ENCODE measurements at regions of chr11 and their contacts with region 1.

Region 1: GRCh38 chr11:67630228-67630942 is 648 bp upstream of the NUDT8 start:
- DNase-seq: peak; percentile 93 to 100
- H3K4me3 ChIP-seq: peak overlapping the region; percentile 87
- H3K27ac ChIP-seq: peak overlapping the region; percentile 50
- H3K4me1 ChIP-seq: peaks cover 8% of the 10 kb centered on the region
- H3K27me3 ChIP-seq: no peaks in the 10 kb centered on the region
- CTCF ChIP-seq: peak; percentile 93

Region 2: DNA sequence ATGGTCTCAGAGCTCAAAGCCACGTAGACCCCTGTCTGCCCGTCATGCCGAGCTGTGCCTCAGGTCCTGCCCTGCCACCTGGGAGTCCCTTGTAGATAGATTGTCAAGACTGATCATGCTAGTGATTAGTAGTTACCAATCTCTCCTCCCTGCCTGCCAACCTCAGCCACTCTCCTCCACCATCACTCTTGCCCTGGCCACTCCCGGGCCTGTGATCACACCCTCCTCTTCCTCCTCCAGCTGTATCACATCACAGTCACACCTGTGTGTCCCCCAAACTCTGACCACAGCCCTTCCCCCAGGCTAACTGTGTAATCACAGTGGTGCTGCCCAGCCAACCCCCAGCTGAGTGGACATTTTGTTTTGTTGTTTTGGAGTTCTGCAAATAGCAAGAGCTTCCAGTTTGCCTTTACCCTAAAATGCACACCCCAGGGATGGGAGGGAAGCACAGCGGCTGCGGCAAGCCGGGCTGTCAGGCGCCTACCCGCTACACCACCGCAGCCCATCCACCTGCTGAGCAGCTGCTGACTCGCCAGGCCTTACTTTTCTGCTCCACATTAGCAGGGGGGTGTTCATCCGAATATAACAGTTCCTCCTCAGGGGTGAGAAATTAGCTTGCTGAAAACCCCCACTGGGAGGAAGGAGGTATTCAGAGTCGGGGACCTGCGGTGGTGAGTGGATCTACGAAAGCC is 727.8 kb before region 1 on chr11:
- CTCF ChIA-PET with region 1: interaction called, 12 read pairs
- POLR2A ChIA-PET with region 1: no interaction called
- intact Hi-C with region 1: no loop called
- DNase-seq: no peak
- H3K4me3 ChIP-seq: no peak overlapping the region
- H3K27ac ChIP-seq: no peak overlapping the region
- H3K4me1 ChIP-seq: peaks cover 34% of the 10 kb centered on the region
- H3K27me3 ChIP-seq: no peaks in the 10 kb centered on the region
- CTCF ChIP-seq: no peak